Lower lobe of right lung (tissue), 2 donors: ENCODE measurements at regions of chr10 and their contacts with region 1.

Region 1: DNA sequence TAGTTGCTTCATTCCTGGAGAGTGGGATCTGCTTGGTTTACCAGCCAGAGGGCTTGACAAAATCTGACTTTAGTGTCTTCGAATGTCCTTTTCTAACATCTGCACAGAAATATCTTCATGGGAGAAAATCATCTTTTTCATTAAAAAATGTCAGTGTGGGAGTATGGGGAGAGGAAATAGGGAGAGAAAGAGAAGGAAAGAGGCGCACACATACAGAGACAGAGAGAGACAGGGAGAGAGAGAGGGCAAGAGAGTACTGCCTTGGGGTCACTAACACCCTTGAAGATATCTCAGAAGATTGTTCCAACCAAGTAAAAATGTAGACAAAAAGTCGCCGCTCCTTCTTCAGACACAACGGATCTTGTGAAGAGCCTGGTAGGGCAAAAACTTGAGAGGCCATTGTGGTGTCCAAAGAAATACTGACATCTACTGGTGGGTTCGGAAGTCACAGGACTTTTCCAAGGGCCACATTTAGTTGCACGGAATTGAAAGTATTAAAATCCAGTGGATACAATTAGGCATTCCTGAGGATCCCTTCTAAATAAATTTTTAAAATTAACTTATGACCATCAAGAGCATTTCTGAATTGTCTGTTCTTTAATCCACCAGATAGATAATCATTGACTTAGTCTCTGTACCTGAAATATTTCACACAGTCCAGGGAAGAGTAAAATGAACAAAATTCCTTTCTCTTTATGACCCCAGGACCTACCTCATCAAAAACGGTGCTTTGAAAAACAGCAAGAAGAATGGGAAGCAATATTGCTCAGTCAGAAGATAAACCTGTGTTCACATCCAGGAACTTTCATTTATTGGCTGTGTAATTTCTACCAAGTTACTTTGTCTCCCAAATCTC is 29.7 kb downstream of the VIM start:
- DNase-seq: no peak
- ATAC-seq: peak; percentile 85 to 92
- H3K4me3 ChIP-seq: no peak overlapping the region
- H3K27ac ChIP-seq: no peak overlapping the region
- H3K4me1 ChIP-seq: no peaks in the 10 kb centered on the region
- H3K27me3 ChIP-seq: no peaks in the 10 kb centered on the region
- CTCF ChIP-seq: peak; percentile 82

Region 2: GRCh38 chr10:16843252-16843870 is 414.3 kb before region 1 on chr10:
- intact Hi-C with region 1: loop called (anchors 10 kb)
- DNase-seq: no peak
- ATAC-seq: peak; percentile 79 to 88
- H3K4me3 ChIP-seq: no peak overlapping the region
- H3K27ac ChIP-seq: no peak overlapping the region
- H3K4me1 ChIP-seq: peaks cover 3% of the 10 kb centered on the region
- H3K27me3 ChIP-seq: no peaks in the 10 kb centered on the region
- CTCF ChIP-seq: peak; percentile 67